GM10248 (cell line): ENCODE measurements at regions of chr3 and their contacts with region 1.

Region 1: GRCh38 chr3:120524171-120524923 is 71.8 kb upstream of the NDUFB4 start:
- DNase-seq: no peak
- CTCF ChIP-seq: no peak

Region 2: DNA sequence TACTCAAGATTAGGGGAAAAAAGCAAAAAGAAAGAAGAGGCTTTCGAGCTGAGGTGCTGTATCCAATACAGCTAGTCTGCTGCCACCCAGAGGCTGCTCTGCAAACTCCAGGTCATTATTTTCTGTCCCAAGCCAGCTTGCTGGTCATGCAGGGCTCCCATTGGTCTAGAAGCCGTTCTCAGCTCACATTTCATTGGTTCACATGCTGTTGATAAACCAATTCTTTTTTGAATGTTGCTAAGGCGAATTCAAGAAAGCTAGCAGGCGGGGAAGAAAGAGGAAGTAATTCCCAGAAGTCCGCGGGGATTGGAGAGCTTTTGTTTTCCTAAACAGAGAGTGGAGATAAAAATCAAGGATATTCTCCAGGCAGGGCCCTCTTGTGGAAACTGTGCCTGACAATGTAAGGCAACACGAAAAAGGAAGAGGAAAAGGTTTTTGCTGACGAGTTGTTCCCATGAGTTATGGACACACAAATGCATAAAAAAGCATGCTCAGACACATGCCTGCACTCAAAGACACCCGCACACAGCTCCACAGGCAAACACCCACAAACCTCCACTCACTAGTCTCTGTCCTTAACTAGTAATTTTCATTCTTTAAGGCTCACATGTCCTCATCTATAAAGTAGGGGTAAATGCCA is 107.0 kb before region 1 on chr3:
- CTCF ChIA-PET with region 1: no interaction called
- POLR2A ChIA-PET with region 1: no interaction called
- DNase-seq: peak; percentile 91
- CTCF ChIP-seq: peak; percentile 73

Region 3: DNA sequence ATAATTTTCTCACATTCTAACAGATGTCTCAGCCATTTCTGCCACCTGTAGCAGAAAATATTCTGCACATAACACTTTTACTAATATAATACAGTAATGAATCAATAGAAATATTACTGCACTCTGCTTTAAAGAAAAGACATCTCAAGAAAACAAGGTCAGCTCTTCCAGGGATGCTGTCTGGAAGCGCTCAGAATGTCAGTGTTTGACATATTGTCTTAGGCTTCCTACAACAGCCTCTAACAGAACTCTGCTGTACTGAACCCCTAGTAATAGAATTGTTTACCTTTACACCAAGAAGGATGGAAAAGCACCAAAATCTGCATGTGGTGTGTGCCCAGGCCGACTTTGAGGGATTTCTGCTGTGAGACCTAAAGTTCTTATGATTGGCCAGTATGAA is 11.7 kb before region 1 on chr3:
- CTCF ChIA-PET with region 1: interaction called, 12 read pairs
- POLR2A ChIA-PET with region 1: no interaction called
- DNase-seq: no peak
- CTCF ChIP-seq: no peak

Region 4: DNA sequence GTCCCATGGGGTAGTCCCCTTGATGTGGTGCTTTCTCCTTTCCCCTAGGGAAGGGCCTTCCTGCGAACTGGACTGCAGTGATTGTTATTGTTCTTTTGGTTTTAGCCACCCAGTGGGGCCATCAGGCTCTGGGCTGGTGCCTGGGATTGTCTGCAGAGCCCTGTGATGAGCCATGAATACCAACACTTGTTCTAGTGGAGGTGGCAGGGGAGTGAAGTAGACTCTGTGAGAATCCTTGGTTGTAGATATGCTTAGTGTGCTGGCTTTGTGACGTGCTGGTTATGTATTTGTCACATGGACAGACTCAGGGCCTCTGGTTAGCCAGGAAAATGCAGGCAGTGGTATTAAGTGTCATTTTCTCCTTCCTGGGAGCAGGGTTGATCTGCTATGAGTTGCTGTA is 20.0 kb after region 1 on chr3:
- CTCF ChIA-PET with region 1: no interaction called
- POLR2A ChIA-PET with region 1: no interaction called
- DNase-seq: no peak
- CTCF ChIP-seq: no peak